ENCODE measurements at regions of chr14 and their contacts with region 1.

Region 1: DNA sequence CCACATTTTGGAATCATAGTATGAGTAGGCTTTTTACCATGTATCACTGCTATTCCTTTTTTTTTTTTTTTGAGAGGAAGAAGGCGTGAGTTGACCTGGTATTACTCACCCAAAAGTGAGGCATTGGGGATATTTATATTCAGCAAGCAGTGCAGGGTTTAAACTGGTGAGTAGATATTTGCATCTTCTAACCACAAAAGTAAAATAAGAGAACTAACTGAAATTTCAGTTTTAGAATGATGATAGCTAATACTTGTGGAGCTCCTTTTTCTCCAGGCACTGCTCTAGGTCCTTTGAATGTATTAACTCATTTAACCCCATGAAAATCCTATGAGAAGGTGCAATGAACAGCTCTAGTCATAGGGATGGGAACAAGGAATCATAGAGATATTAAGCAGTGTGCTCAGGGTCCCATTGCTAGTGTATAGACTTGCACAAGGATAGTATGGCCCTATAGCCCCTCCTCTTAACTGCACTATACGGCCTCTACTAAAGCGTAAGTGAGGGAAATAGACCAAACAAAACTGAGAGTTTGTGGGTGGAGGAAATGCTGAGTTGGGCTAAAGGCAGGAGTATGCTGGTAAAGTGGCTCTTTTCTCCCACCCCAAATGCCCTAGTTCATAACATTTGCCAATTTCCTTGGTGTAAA is 104.3 kb upstream of the MAX start:
- DNase-seq: peak; percentile 88
- H3K4me3 ChIP-seq: peak overlapping the region; percentile 61
- H3K27ac ChIP-seq: peak overlapping the region; percentile 97
- H3K4me1 ChIP-seq: peaks cover 93% of the 10 kb centered on the region
- CTCF ChIP-seq: no peak

Region 2: GRCh38 chr14:65102441-65103149 is 104.0 kb before region 1 on chr14 and contains the start of gene MAX:
- CTCF ChIA-PET with region 1: interaction called, 4 read pairs
- POLR2A ChIA-PET with region 1: interaction called, 4 read pairs
- intact Hi-C with region 1: loop called (anchors 2 kb)
- DNase-seq: peak; percentile 99
- H3K4me3 ChIP-seq: peak within 1 kb of the TSS; percentile 99
- H3K27ac ChIP-seq: peak within 1 kb of the TSS; percentile 63
- H3K4me1 ChIP-seq: peaks cover 32% of the 10 kb centered on the region
- CTCF ChIP-seq: no peak
- total RNA-seq, gene MAX: 49.1 and 58.3 TPM in 2 replicates

Region 3: DNA sequence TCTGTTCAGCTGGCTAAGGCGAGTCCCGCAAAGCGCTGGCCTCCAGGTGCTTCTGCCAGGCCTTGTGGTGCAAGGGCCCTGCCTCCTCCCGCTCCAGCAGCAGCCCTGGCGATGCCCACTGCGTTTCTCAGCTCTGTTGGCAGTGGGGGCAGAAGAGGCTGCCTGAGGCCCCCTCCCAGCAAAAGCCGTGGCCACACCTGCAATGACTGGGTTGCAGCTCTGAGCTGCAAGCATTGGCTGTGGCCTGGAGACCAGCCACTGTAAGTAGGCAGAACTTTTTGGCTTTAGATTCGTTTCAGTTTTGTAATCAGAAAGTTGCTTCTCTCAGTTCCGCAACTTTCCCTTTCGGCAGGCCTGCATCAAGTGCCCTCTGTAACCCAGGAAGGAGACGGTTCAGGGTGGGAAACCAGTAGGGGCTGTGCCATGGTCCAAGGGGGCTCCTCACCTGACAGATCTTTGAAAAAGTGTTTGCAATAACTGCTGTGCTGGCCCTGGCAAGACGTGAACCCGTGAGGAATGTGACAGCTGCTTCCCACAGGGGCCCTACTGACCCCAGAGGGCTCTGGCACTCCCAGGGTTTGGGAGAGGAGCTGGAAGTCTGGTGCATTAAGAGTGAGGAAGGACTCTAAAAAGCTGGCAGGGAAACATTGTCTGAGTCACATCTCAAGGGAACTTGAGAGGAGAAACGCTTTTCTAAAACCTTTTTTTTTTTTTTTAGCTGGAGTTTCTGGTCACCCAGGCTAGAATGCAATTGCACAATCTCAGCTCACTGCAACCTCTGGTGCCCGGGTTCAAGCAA is 49.8 kb before region 1 on chr14:
- CTCF ChIA-PET with region 1: no interaction called
- POLR2A ChIA-PET with region 1: no interaction called
- intact Hi-C with region 1: no loop called
- DNase-seq: peak; percentile 68
- H3K4me3 ChIP-seq: peak overlapping the region; percentile 30
- H3K27ac ChIP-seq: no peak overlapping the region
- H3K4me1 ChIP-seq: peaks cover 41% of the 10 kb centered on the region
- CTCF ChIP-seq: no peak

Region 4: DNA sequence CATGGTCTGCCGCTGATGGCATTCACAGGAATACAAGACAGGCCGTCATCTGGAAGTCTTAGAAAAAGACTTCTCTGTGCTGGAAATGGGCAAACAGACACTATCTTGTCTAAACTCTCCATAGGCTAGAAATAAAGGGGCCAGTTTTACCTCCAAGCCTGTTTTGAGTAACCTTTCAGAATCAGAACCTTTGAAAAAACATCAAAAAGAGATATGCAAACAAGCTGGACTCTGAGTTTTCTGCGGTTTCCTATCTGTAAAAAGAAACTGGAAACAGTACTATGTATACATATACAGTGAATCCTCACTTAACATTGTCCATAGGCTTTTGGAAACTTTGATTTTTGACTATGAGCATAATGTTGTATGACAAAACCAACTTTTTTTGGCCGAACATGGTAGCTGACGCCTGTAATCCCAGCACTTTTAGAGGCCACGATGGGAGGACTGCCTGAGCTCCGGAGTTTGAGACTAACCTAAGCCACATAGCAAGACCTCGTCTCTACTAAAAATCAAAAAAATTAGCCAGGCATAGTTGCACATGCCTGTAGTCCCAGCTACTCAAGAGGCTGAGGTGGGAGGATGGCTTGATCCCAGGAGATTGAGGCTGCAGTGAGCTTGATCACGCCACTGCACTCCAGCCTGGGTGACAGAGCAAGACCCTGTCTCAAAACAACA is 11.4 kb before region 1 on chr14:
- CTCF ChIA-PET with region 1: no interaction called
- POLR2A ChIA-PET with region 1: interaction called, 42 read pairs
- intact Hi-C with region 1: no loop called
- DNase-seq: peak; percentile 64
- H3K4me3 ChIP-seq: peak overlapping the region; percentile 49
- H3K27ac ChIP-seq: peak overlapping the region; percentile 2
- H3K4me1 ChIP-seq: peaks cover 38% of the 10 kb centered on the region
- CTCF ChIP-seq: no peak

Region 5: GRCh38 chr14:65229751-65230749 is 23.5 kb after region 1 on chr14:
- CTCF ChIA-PET with region 1: interaction called, 4 read pairs
- POLR2A ChIA-PET with region 1: interaction called, 15 read pairs
- intact Hi-C with region 1: no loop called
- DNase-seq: peak; percentile 30
- H3K4me3 ChIP-seq: peak overlapping the region; percentile 52
- H3K27ac ChIP-seq: no peak overlapping the region
- H3K4me1 ChIP-seq: peaks cover 60% of the 10 kb centered on the region
- CTCF ChIP-seq: no peak

Region 6: GRCh38 chr14:65302571-65303189 is 96.1 kb after region 1 on chr14:
- CTCF ChIA-PET with region 1: interaction called, 4 read pairs
- POLR2A ChIA-PET with region 1: interaction called, 43 read pairs
- intact Hi-C with region 1: loop called (anchors 1 kb)
- DNase-seq: peak; percentile 82
- H3K4me3 ChIP-seq: peak overlapping the region; percentile 61
- H3K27ac ChIP-seq: peak overlapping the region; percentile 99
- H3K4me1 ChIP-seq: peaks cover 98% of the 10 kb centered on the region
- CTCF ChIP-seq: no peak

Region 7: DNA sequence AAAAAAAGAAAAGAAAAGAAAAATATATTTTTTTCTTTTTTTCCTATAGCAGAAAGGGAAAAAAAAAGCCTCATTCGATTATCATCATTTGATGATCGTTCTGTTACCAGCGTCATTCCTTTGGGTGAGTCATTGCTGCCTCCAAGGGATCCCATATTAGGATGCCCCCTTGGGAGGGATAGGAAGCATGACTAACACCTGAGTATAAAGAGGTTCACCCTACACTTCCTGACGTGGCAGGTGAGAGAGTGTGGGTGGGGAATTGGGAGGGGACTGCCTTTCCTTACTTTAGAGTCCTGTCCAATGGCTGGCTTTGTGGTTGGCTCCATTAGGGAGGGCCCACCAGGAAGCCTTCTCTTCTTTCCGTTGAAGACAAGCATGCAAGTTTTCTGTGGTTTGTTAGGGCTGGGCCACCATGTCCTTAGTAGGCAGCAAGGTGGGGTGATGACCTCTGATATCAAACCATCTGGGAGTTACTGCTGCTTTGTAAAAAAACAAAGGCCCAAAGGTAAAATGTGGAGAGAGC is 149.8 kb after region 1 on chr14:
- CTCF ChIA-PET with region 1: no interaction called
- POLR2A ChIA-PET with region 1: interaction called, 11 read pairs
- intact Hi-C with region 1: loop called (anchors 1 kb)
- DNase-seq: peak; percentile 54
- H3K4me3 ChIP-seq: peak overlapping the region; percentile 38
- H3K27ac ChIP-seq: peak overlapping the region; percentile 97
- H3K4me1 ChIP-seq: peaks cover 98% of the 10 kb centered on the region
- CTCF ChIP-seq: no peak